GM23248 (cell line): ENCODE measurements at regions of chr18 and their contacts with region 1.

Region 1: DNA sequence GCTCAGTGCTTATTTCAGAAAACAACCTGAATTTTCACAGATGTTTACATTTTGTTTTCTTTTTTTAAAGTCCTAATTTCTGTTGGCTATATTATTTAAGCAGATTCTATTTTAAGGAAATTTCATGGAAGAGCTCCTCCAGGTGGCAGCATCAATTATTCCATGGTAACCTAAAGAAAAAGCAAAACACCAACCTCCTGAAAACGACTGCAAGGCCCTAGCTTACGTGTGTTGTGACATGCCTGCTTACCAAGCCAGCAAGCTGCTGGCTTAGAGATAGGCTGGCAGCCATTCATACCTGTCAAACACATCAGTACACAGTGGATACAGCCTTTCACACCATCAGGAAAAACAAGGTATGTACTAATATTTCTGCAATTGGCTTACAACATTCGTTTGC is 64.9 kb downstream of the LPIN2 start:
- DNase-seq: peak; percentile 55
- H3K4me3 ChIP-seq: no peak overlapping the region
- H3K27ac ChIP-seq: no peak overlapping the region
- H3K4me1 ChIP-seq: no peaks in the 10 kb centered on the region
- H3K27me3 ChIP-seq: no peaks in the 10 kb centered on the region

Region 2: GRCh38 chr18:3230401-3231334 is 282.6 kb after region 1 on chr18:
- in situ Hi-C with region 1: loop called (anchors 5 kb)
- DNase-seq: no peak
- H3K4me3 ChIP-seq: no peak overlapping the region
- H3K27ac ChIP-seq: no peak overlapping the region
- H3K4me1 ChIP-seq: no peaks in the 10 kb centered on the region
- H3K27me3 ChIP-seq: no peaks in the 10 kb centered on the region